ENCODE measurements at regions of chr15 and their contacts with region 1.

Region 1: GRCh38 chr15:90071208-90071807 is 31.0 kb downstream of the IDH2 start:
- DNase-seq: peak; percentile 87
- ATAC-seq: peak; percentile 98
- H3K4me3 ChIP-seq: no peak overlapping the region
- H3K4me3 Mint-ChIP-seq: no peak overlapping the region
- H3K27ac ChIP-seq: no peak overlapping the region
- H3K27ac Mint-ChIP-seq: peak overlapping the region; percentile 28
- H3K4me1 ChIP-seq: peaks cover 0 to 7% of the 10 kb centered on the region in 2 donors
- H3K4me1 Mint-ChIP-seq: peaks cover 4% of the 10 kb centered on the region
- H3K27me3 ChIP-seq: no peaks in the 10 kb centered on the region
- H3K27me3 Mint-ChIP-seq: no peaks in the 10 kb centered on the region
- CTCF ChIP-seq: peak; percentile 83

Region 2: DNA sequence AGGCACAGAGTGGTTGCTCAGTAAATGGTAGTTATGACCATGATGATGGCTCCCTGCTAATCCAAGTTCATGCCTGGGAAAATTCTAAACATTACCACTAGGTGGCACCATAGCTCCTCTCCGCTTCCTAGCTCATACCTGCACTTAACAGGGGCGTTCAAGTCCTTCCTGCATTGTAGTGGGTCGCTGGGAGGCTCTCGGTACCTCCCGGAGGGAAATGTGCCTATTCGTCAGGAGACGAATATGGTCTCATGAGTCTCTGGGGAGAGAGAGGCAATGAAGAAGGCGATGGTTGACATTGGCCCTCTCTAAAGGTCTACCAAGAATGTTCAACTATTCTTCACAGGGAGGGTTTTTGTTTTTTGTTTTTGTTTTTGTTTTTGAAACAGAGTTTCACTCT is 331.2 kb before region 1 on chr15:
- CTCF ChIA-PET with region 1: interaction called, 8 read pairs
- POLR2A ChIA-PET with region 1: no interaction called
- intact Hi-C with region 1: loop called (anchors 1 kb)
- DNase-seq: peak; percentile 82
- ATAC-seq: peak; percentile 87
- H3K4me3 ChIP-seq: no peak overlapping the region
- H3K4me3 Mint-ChIP-seq: peak overlapping the region; percentile 41
- H3K27ac ChIP-seq: no peak overlapping the region
- H3K27ac Mint-ChIP-seq: no peak overlapping the region
- H3K4me1 ChIP-seq: peaks cover 0 to 2% of the 10 kb centered on the region in 2 donors
- H3K4me1 Mint-ChIP-seq: peaks cover 3% of the 10 kb centered on the region
- H3K27me3 ChIP-seq: peaks cover 0 to 4% (median 0%) of the 10 kb centered on the region in 4 experiments
- H3K27me3 Mint-ChIP-seq: peaks cover 25% of the 10 kb centered on the region
- CTCF ChIP-seq: peak; percentile 96

Region 3: DNA sequence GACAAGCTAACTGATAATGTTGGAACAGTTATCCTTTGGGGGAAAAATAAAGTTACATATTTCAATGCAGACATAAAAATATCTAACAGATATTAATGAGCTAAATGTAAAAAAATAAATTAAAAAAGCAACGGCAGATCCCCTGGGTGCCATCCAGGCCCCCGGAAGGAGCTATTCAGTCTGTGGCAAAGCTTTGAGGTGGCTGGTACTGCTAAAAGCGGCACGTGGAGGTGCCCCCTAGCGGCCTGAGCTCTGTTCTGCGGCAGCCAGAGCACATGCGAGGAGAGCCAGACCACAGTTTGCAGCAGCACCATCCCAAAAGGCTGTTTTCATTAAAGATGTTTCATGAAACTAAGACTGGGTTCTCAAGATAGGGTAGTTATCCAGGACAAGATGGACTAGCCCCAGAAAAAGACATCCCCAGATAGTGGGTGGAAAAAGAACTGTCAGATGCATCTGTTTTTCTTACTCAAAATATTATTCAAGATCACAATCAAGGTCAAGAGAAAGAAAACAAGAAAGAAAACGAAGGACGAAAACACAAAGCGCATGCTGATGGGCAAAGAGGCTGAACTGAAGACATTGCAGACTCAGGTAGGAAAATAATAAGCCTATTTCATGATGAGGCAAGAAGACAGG is 196.3 kb before region 1 on chr15:
- CTCF ChIA-PET with region 1: interaction called, 24 read pairs
- POLR2A ChIA-PET with region 1: no interaction called
- intact Hi-C with region 1: no loop called
- DNase-seq: peak; percentile 81
- ATAC-seq: peak; percentile 99
- H3K4me3 ChIP-seq: no peak overlapping the region
- H3K4me3 Mint-ChIP-seq: no peak overlapping the region
- H3K27ac ChIP-seq: no peak overlapping the region
- H3K27ac Mint-ChIP-seq: no peak overlapping the region
- H3K4me1 ChIP-seq: peaks cover 0 to 4% of the 10 kb centered on the region in 2 donors
- H3K4me1 Mint-ChIP-seq: peaks cover 5% of the 10 kb centered on the region
- H3K27me3 ChIP-seq: no peaks in the 10 kb centered on the region
- H3K27me3 Mint-ChIP-seq: no peaks in the 10 kb centered on the region
- CTCF ChIP-seq: peak; percentile 97

Region 4: GRCh38 chr15:89893696-89894455 is 177.4 kb before region 1 on chr15 and contains the start of gene AP3S2:
- CTCF ChIA-PET with region 1: interaction called, 96 read pairs
- POLR2A ChIA-PET with region 1: interaction called, 3 read pairs
- intact Hi-C with region 1: loop called (anchors 1 kb)
- DNase-seq: peak; percentile 93
- ATAC-seq: peak; percentile 91
- H3K4me3 ChIP-seq: peak within 1 kb of the TSS; percentile 75 to 95 (median 89)
- H3K4me3 Mint-ChIP-seq: peak within 1 kb of the TSS; percentile 98
- H3K27ac ChIP-seq: peak within 1 kb of the TSS; percentile 62 to 80
- H3K27ac Mint-ChIP-seq: peak within 1 kb of the TSS; percentile 95
- H3K4me1 ChIP-seq: peaks cover 7 to 14% of the 10 kb centered on the region in 2 donors
- H3K4me1 Mint-ChIP-seq: peaks cover 33% of the 10 kb centered on the region
- H3K27me3 ChIP-seq: no peaks in the 10 kb centered on the region
- H3K27me3 Mint-ChIP-seq: no peaks in the 10 kb centered on the region
- CTCF ChIP-seq: no peak
- total RNA-seq, gene AP3S2: 32.3 and 43.1 TPM in 2 replicates

Region 5: GRCh38 chr15:89971592-89971997 is 99.7 kb before region 1 on chr15:
- CTCF ChIA-PET with region 1: interaction called, 18 read pairs
- POLR2A ChIA-PET with region 1: no interaction called
- intact Hi-C with region 1: loop called (anchors 1 kb)
- DNase-seq: peak; percentile 43
- ATAC-seq: peak; percentile 61
- H3K4me3 ChIP-seq: no peak overlapping the region
- H3K4me3 Mint-ChIP-seq: no peak overlapping the region
- H3K27ac ChIP-seq: no peak overlapping the region
- H3K27ac Mint-ChIP-seq: no peak overlapping the region
- H3K4me1 ChIP-seq: peaks cover 36 to 44% of the 10 kb centered on the region in 2 donors
- H3K4me1 Mint-ChIP-seq: peaks cover 39% of the 10 kb centered on the region
- H3K27me3 ChIP-seq: no peaks in the 10 kb centered on the region
- H3K27me3 Mint-ChIP-seq: no peaks in the 10 kb centered on the region
- CTCF ChIP-seq: no peak

Region 6: DNA sequence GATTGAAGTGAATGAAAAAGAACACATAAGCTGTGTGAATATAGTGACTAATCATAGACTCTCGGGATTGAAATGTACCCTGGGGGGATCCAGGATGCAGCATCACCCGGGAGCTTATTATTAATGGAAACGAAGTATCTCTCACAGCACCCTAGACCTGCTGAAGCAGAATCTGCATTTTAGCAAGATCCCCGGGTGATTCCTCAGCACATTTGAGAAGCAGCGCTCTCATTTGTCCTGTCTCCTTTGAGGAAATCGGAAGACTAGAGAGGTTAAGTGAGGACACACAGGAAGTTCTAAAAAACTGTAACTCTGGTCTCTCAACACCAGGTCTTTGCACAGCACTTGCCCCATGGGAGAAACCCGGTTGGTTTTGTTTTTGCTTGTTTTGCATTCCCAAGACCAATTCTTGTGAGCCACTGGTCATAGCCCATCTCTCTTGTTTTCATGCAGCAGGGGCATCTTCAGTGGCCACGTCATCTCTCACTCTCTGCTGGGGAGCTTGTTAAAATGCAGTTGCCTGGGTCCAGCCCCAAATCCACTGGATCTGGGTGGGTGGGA is 40.0 kb before region 1 on chr15:
- CTCF ChIA-PET with region 1: interaction called, 28 read pairs
- POLR2A ChIA-PET with region 1: no interaction called
- intact Hi-C with region 1: loop called (anchors 2 kb)
- DNase-seq: peak; percentile 55
- ATAC-seq: peak; percentile 87
- H3K4me3 ChIP-seq: peak overlapping the region in 4 of 5 experiments; percentile 12 to 40 (median 32)
- H3K4me3 Mint-ChIP-seq: peak overlapping the region; percentile 78
- H3K27ac ChIP-seq: peak overlapping the region; percentile 5 to 6
- H3K27ac Mint-ChIP-seq: peak overlapping the region; percentile 79
- H3K4me1 ChIP-seq: peaks cover 34 to 43% of the 10 kb centered on the region in 2 donors
- H3K4me1 Mint-ChIP-seq: peaks cover 46% of the 10 kb centered on the region
- H3K27me3 ChIP-seq: no peaks in the 10 kb centered on the region
- H3K27me3 Mint-ChIP-seq: no peaks in the 10 kb centered on the region
- CTCF ChIP-seq: no peak

Region 7: DNA sequence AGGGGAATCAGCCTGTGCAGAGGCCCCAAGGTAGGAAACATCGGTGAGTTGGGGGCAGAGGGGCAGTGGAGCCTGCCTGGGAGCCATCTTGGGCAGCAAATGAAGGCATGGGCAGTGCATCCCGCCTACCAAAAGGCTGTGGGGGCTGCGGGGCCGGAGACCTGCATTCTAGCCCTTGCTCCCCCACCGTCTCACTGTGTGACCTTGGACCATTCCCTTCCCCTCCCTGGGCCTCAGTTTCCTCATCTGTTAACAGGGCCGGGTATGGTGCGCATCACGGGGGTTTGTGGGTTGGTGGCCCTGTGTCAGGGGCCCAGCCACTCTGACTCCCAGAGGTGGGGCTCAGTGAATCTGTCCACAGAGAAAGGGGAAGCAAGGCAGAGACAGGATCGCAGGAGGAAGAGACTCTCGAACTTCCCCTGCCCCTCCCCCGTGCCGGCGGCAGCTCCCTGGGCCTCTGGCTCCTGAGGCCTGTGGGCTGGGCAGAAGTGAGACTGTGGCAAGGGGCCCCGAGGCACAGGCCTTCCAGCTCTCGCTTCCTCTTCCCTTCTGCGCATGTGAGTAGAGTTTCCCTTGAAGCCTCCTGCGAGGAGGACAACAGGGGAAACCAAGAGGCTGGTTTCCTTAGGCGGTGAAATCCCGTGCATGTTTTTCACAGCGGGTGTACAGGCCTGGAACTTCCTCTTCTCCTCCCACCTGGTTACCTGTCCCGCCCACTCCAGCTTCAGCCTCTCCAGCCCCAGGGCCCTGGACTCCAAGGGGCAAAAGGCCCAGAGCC is 11.9 kb before region 1 on chr15:
- CTCF ChIA-PET with region 1: interaction called, 19 read pairs
- POLR2A ChIA-PET with region 1: interaction called, 3 read pairs
- intact Hi-C with region 1: loop called (anchors 1 kb)
- DNase-seq: peak; percentile 96
- ATAC-seq: peak; percentile 88
- H3K4me3 ChIP-seq: peak overlapping the region in 1 of 5 experiments; percentile 22
- H3K4me3 Mint-ChIP-seq: peak overlapping the region; percentile 80
- H3K27ac ChIP-seq: peak overlapping the region; percentile 82 to 88
- H3K27ac Mint-ChIP-seq: peak overlapping the region; percentile 98
- H3K4me1 ChIP-seq: peaks cover 54 to 93% of the 10 kb centered on the region in 2 donors
- H3K4me1 Mint-ChIP-seq: peaks cover 81% of the 10 kb centered on the region
- H3K27me3 ChIP-seq: no peaks in the 10 kb centered on the region
- H3K27me3 Mint-ChIP-seq: no peaks in the 10 kb centered on the region
- CTCF ChIP-seq: no peak